G401 (cell line): ENCODE measurements at regions of chr1 and their contacts with region 1.

Region 1: DNA sequence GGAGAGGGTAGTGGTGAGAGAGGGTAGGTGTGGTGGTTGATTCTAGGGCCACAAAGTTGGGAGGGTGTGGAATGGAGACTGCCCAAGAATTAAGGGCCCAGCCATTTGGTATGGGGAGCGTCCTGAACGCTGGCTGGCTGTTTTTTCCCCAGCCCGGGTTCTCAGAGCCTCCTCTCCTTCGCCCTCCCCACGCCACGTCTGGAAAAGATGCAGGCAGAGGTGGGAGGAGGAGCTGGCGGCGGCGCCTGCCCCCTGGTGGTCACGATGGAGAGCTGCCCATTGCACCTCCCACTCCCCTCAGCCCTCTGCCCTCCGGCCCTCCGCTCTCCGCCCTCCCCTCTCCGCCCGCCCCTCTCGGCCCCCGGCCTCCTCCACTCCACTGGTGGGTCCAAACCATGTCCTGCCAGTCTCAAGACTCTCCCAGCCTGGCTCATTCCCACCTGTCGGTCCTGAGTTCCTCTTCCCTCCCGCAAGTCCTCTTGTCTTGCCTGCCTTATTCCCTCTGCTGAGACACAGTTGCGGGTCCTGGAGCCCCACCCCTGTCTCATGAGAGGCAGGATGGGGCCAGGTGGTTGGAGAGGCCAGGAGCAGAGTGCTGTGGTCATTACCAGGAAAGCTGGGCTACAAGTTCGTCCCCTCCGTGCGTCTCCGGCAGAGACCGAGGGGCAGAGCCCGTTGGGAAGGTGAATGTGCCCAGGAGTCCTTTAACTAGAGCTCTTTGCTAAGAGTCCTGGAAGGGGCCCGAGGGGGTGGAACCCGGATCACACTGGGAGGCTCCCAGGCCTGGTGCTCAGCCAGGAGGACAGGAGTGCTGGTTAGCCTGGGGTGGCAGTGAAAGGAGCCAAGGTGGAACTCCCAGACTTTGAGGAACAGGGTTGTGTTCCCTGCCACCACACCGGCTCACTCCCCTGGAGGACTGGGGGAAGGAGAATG is 22.6 kb downstream of the ETNK2 start:
- DNase-seq: peak; percentile 69

Region 2: DNA sequence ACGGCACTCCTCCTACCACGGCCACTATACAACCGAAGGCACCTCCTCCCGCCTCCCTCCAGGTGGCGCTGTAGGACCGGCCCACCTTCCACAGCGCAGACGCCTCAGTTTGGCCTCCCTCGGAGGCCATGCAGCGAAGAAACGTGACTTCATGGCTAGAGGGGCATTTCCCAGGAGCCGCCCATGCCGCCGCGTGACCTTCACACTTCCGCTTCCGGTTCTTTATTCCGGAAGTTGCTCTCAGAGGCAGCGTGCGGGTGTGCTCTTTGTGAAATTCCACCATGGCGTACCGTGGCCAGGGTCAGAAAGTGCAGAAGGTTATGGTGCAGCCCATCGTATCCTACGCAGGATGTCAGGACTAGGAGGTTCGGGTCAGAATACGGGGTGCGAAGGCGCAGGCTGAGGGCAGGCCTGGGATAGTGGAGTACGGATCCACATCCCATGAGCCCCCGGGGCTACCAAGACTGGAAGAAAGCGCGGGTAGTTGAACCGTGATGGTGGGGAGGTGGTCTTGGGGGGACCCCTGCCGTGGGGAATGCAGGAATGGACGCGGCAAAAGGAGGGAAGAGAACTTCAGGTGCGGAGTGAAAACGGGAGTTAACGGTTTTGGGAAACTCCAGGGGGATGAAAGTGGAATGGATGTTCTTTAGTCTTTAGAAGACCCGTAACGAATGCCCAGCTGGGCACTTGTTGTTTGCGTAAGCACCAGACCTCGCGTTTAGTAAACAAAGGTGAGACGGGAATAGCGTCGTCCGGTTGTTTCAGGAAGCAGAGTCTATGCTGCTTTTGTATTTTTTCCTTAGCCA is 267.6 kb before region 1 on chr1 and contains the start of gene SNRPE:
- in situ Hi-C with region 1: loop called (anchors 25 kb)
- DNase-seq: peak; percentile 98
- total RNA-seq, gene SNRPE: 149 and 171 TPM in 2 replicates

Region 3: GRCh38 chr1:204254031-204254661 is 124.9 kb after region 1 on chr1:
- in situ Hi-C with region 1: no loop called
- DNase-seq: no peak